Natural killer cell (primary cell): ENCODE measurements at regions of chr1 and their contacts with region 1.

Region 1: DNA sequence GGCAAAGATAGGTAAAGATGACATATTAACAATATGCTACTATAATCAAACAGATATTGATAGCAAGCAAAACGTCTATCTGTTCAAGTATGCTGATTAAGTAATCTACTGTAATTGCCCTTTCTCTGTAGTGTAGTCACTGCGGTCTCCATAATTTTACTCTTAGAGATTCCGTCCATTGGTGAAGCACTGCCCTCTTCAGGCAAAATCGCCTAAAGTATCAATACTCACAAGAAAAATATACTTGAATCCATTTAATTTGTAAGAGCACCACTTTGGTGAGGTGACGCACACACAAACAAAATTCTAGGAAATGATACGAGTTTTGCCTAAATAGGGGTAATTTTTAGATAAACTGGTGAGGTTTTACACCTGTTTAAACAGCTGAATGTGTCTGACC is 434.6 kb upstream of the CHRM3 start:
- DNase-seq: no peak
- ATAC-seq: no peak
- H3K4me3 ChIP-seq: no peak overlapping the region
- H3K4me3 Mint-ChIP-seq: no peak overlapping the region
- H3K27ac ChIP-seq: no peak overlapping the region
- H3K27ac Mint-ChIP-seq: no peak overlapping the region
- H3K4me1 ChIP-seq: no peaks in the 10 kb centered on the region
- H3K4me1 Mint-ChIP-seq: peaks cover 5 to 7% of the 10 kb centered on the region in 2 donors
- H3K27me3 ChIP-seq: no peaks in the 10 kb centered on the region
- H3K27me3 Mint-ChIP-seq: no peaks in the 10 kb centered on the region
- CTCF ChIP-seq: no peak

Region 2: DNA sequence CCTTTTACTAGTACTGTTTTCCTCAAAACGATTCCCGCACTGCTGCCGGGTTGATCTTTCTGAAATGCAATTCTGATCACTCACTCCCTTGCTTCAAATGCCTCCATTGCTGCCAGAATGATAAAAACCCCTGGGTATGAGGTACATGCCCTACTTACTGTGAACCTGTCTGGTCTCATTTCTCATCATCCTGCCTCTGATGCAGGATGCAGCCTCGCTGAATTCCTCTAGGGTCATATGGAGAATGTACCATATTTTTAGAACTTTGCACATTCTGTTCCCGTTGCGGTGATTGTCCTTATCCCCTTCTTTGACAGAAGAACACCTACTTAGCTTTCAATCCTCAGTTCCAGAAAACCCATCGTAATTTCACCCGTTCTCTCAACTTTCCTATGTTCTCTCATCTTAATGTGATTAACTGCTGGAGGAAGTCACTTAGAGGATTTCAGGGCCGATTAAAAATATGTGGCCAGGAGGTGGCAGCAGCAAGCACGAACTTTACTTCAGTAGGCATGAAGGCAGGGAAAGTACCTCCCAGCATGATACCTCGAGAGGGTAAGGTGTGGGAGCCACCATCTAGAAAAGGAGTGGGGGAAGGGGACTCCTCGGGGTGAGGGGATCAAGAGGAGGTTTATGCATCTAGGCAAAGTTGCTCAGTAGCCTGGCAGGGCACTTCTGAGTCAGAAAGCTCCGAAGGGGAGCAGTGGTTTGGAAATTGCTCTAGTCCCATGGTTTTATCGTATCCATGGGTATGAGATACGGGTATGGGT is 699.6 kb before region 1 on chr1:
- intact Hi-C with region 1: loop called (anchors 5 kb)
- DNase-seq: peak in 1 of 2 donors; percentile 20
- ATAC-seq: no peak
- H3K4me3 ChIP-seq: no peak overlapping the region
- H3K4me3 Mint-ChIP-seq: no peak overlapping the region
- H3K27ac ChIP-seq: no peak overlapping the region
- H3K27ac Mint-ChIP-seq: no peak overlapping the region
- H3K4me1 ChIP-seq: no peaks in the 10 kb centered on the region
- H3K4me1 Mint-ChIP-seq: no peaks in the 10 kb centered on the region
- H3K27me3 ChIP-seq: no peaks in the 10 kb centered on the region
- H3K27me3 Mint-ChIP-seq: no peaks in the 10 kb centered on the region
- CTCF ChIP-seq: no peak

Region 3: DNA sequence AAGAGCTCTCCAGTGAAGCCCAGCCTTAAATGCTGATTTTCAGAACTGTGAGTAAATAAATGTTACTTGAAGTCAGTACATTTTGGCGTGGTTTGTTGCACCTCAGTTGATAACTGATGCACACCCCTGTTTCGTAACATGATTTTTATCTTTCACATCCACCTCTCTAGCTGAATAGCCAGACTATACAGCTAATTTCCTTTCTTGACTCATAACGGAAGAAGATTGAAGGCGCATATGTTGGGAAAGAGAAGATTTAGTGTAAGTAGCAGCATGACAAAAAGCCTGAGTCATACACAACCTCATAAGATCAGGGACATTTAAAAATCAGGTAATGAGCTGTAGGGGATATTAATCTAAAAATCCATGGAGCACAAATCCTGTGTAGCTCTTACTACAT is 344.9 kb before region 1 on chr1:
- intact Hi-C with region 1: no loop called
- DNase-seq: no peak
- ATAC-seq: no peak
- H3K4me3 ChIP-seq: no peak overlapping the region
- H3K4me3 Mint-ChIP-seq: no peak overlapping the region
- H3K27ac ChIP-seq: no peak overlapping the region
- H3K27ac Mint-ChIP-seq: no peak overlapping the region
- H3K4me1 ChIP-seq: no peaks in the 10 kb centered on the region
- H3K4me1 Mint-ChIP-seq: no peaks in the 10 kb centered on the region
- H3K27me3 ChIP-seq: no peaks in the 10 kb centered on the region
- H3K27me3 Mint-ChIP-seq: no peaks in the 10 kb centered on the region
- CTCF ChIP-seq: no peak